CD4-positive, alpha-beta T cell (primary cell): ENCODE measurements at regions of chr2 and their contacts with region 1.

Region 1: GRCh38 chr2:120174963-120175581 is 48.1 kb downstream of the TMEM185B start:
- DNase-seq: peak in 4 of 14 experiments; percentile 26 to 79 (median 74)
- ATAC-seq: no peak
- H3K4me3 ChIP-seq: no peak overlapping the region
- H3K4me3 Mint-ChIP-seq: peak overlapping the region; percentile 50
- H3K27ac ChIP-seq: no peak overlapping the region
- H3K27ac Mint-ChIP-seq: peak overlapping the region; percentile 95
- H3K4me1 ChIP-seq: peaks cover 34% of the 10 kb centered on the region
- H3K4me1 Mint-ChIP-seq: peaks cover 52% of the 10 kb centered on the region
- H3K27me3 ChIP-seq: no peaks in the 10 kb centered on the region
- H3K27me3 Mint-ChIP-seq: no peaks in the 10 kb centered on the region
- CTCF ChIP-seq: peak; percentile 88

Region 2: DNA sequence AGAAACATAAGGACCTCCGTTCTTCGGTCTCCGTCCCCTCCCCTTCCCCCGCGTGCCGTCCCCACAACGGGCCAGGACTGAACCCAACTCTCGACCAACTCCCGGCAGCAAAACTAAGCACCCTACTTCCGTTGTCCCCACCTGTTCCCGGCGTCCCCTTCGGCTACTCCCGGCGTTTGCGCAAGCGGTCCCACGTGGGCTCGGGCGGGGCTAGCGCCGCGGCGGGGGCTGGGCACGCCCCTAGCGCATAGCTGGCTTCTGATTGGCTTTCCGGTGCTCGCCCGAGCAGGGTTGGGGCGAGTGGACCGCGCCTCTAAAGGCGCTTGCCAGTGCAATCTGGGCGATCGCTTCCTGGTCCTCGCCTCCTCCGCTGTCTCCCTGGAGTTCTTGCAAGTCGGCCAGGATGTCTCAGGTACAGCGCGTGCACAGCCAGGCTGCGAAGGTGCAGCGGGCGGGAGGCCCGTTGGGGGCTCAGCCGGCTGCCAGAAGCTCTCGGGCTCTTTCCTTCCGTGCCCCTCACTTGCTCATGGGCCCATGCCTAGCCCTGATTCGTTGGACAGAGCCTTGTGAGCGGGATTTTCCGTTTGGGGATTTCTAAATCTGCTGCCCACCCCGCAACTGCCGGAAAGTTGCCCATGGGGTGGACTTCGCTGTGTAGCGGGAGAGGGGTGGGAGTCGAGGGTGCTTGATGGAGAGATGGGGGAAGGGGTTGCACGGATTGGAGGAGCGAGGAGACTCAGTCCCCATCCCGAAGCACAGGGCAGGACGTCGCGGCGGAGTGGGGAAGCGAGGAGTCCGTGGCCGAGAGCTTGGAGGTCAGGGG is 808.2 kb before region 1 on chr2 and contains the starts of genes C2orf76 and DBI:
- CTCF ChIA-PET with region 1: no interaction called
- POLR2A ChIA-PET with region 1: no interaction called
- intact Hi-C with region 1: loop called in 1 of 2 experiments (anchors 10 kb)
- DNase-seq: peak; percentile 82 to 97 (median 88)
- ATAC-seq: peak; percentile 93
- H3K4me3 ChIP-seq: peak within 1 kb of the TSS; percentile 94
- H3K4me3 Mint-ChIP-seq: peak within 1 kb of the TSS; percentile 91
- H3K27ac ChIP-seq: peak within 1 kb of the TSS; percentile 59 to 76
- H3K27ac Mint-ChIP-seq: peak within 1 kb of the TSS; percentile 89
- H3K4me1 ChIP-seq: peaks cover 41% of the 10 kb centered on the region
- H3K4me1 Mint-ChIP-seq: peaks cover 59% of the 10 kb centered on the region
- H3K27me3 ChIP-seq: no peaks in the 10 kb centered on the region
- H3K27me3 Mint-ChIP-seq: no peaks in the 10 kb centered on the region
- CTCF ChIP-seq: no peak
- total RNA-seq, gene C2orf76: 2.8 to 4.5 TPM
- total RNA-seq, gene DBI: 23.6 to 27.4 TPM

Region 3: GRCh38 chr2:119694845-119695521 is 480.1 kb before region 1 on chr2:
- CTCF ChIA-PET with region 1: no interaction called
- POLR2A ChIA-PET with region 1: interaction called, 8 read pairs
- intact Hi-C with region 1: loop called in 1 of 2 experiments (anchors 5 kb)
- DNase-seq: peak in 12 of 14 experiments; percentile 10 to 63 (median 34)
- ATAC-seq: peak; percentile 81
- H3K4me3 ChIP-seq: peak overlapping the region; percentile 39
- H3K4me3 Mint-ChIP-seq: peak overlapping the region; percentile 83
- H3K27ac ChIP-seq: peak overlapping the region; percentile 29 to 34
- H3K27ac Mint-ChIP-seq: peak overlapping the region; percentile 71
- H3K4me1 ChIP-seq: peaks cover 47% of the 10 kb centered on the region
- H3K4me1 Mint-ChIP-seq: peaks cover 50% of the 10 kb centered on the region
- H3K27me3 ChIP-seq: peaks cover 0 to 2% of the 10 kb centered on the region in 2 experiments
- H3K27me3 Mint-ChIP-seq: no peaks in the 10 kb centered on the region
- CTCF ChIP-seq: no peak

Region 4: DNA sequence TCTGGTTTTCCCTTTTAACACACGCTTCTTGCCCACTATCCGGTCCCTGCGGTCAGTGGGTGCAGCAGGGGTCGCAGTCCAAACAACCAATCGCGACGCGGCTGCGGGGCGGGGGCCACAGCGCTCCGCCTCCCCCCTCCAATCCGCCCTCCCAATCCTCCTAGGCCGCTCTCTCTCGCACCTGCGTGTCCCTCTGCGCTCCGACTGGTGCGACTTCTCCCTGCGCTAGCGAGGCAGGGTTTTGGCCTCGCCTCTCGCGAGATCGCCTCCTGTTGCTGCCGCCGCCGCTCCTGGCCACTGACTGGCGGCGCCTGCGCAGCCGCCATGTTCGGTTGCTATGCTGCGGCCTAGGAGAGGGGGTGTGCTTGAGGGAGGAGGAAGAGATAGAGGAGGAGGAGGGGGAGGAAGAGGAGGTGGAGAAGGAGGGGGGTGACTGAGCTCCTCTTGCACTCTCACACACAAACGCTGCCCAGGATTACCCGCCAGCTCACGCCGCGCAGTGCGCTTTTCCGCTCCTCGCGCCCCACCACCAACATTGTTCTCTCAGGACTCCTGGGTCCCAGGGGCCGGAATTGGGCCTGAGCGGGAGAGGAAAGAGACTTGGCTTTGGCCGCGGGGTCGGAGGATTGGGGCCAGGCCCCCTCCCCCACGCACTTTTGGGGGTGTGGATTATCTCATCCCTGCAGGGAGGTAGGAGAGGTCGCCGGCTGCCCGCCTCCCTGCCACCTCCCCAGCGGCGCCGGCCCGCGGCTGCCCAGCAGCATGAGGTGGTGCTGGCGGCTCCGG is 415.4 kb before region 1 on chr2 and contains the start of gene PTPN4:
- CTCF ChIA-PET with region 1: interaction called, 5 read pairs
- POLR2A ChIA-PET with region 1: interaction called, 10 read pairs
- intact Hi-C with region 1: loop called (anchors 2 kb)
- DNase-seq: peak; percentile 91 to 99 (median 95)
- ATAC-seq: peak; percentile 88
- H3K4me3 ChIP-seq: peak within 1 kb of the TSS; percentile 92
- H3K4me3 Mint-ChIP-seq: peak within 1 kb of the TSS; percentile 97
- H3K27ac ChIP-seq: peak within 1 kb of the TSS; percentile 86 to 91
- H3K27ac Mint-ChIP-seq: peak within 1 kb of the TSS; percentile 94
- H3K4me1 ChIP-seq: peaks cover 9% of the 10 kb centered on the region
- H3K4me1 Mint-ChIP-seq: peaks cover 55% of the 10 kb centered on the region
- H3K27me3 ChIP-seq: no peaks in the 10 kb centered on the region
- H3K27me3 Mint-ChIP-seq: no peaks in the 10 kb centered on the region
- CTCF ChIP-seq: no peak
- total RNA-seq, gene PTPN4: 96.9 to 102 TPM

Region 5: DNA sequence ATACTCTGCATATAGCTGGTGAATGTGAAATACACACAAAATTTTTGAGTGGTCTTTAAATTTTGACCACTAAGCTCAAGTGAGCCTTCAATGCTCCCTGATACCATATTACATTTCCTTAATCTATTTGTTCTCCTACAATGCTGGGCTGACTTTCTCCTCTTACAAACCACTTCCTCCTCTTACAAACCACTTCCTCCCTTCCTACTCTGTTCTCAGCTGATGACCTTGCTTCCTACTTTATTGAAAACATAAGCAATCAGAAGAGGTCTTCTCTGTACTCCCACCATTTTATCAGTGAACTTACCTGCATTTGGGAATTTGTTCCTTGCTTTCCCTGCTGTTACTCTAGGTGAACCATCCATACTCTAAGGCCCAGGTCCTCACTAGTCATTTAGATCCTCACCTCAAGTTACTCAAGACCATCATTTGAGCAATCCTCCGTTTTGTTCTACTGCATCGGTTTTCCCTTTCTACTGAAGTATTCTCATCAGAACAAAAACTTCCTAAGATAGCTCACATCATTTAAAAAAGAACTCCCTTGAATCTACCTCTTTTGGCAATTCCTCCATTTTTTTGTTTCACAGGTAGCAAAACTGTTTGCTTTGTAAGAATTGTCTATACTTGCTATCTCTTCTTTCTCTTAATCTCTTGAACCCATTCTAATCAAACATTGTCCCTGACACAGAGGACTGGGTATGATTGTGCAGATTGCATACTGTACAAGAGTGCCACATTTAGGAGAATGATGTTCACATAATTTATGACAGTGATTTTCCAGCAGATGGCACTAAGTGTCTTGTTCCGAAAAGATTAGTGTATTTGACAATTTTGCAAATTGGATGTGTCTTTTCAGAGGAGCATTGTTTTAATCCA is 65.6 kb before region 1 on chr2:
- CTCF ChIA-PET with region 1: interaction called, 15 read pairs
- POLR2A ChIA-PET with region 1: interaction called, 30 read pairs
- intact Hi-C with region 1: loop called (anchors 1 to 2 kb)
- DNase-seq: peak in 4 of 14 experiments; percentile 3 to 83 (median 55)
- ATAC-seq: peak; percentile 83
- H3K4me3 ChIP-seq: peak overlapping the region; percentile 5
- H3K4me3 Mint-ChIP-seq: peak overlapping the region; percentile 44
- H3K27ac ChIP-seq: no peak overlapping the region
- H3K27ac Mint-ChIP-seq: peak overlapping the region; percentile 2
- H3K4me1 ChIP-seq: no peaks in the 10 kb centered on the region
- H3K4me1 Mint-ChIP-seq: peaks cover 39% of the 10 kb centered on the region
- H3K27me3 ChIP-seq: no peaks in the 10 kb centered on the region
- H3K27me3 Mint-ChIP-seq: no peaks in the 10 kb centered on the region
- CTCF ChIP-seq: peak; percentile 83

Region 6: DNA sequence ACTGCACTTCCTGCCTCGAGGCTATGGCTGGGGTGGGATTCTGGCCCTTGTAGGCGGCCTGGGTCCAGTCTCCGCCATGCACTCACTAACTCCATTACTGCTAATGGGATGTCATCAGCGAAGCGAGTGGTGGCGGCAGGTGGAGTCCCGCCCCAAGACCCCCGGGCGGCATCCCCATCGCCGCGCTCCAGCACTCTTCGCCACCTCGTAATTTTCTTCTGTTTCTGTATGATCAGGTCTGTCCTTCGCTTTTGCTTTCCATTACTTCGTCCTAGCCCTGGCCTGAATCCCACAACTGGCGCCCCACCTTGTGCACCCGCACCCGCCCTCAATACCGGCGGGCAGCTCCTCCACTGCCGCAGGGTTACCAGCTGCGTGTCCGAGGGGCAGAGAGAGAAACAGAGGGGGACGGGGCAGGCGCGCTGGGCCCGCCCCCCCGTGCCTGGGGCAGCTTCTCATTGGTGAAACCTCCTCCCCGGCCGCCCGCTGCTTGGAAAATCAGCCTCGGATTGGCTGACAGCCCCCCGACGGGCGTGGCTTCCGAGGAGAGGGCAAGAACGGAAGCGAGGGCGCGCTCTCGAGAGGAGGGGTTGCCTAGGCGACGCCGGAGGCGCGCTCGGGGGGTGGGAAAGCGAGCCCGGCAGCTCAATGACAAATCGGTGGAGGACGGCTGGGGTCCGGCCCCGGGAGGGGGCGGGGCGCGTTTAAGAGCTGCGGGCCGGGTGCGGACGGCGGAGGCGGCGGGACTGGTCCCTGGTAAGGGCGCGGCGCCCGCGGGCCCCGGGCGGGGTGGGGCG is 77.4 kb after region 1 on chr2 and contains the start of gene RALB:
- CTCF ChIA-PET with region 1: interaction called, 10 read pairs
- POLR2A ChIA-PET with region 1: interaction called, 26 read pairs
- intact Hi-C with region 1: loop called in 1 of 2 experiments (anchors 1 kb)
- DNase-seq: peak; percentile 95 to 99 (median 98)
- ATAC-seq: peak; percentile 95
- H3K4me3 ChIP-seq: peak within 1 kb of the TSS; percentile 83
- H3K4me3 Mint-ChIP-seq: peak within 1 kb of the TSS; percentile 97
- H3K27ac ChIP-seq: peak within 1 kb of the TSS; percentile 35 to 76
- H3K27ac Mint-ChIP-seq: peak within 1 kb of the TSS; percentile 87
- H3K4me1 ChIP-seq: peaks cover 20% of the 10 kb centered on the region
- H3K4me1 Mint-ChIP-seq: peaks cover 50% of the 10 kb centered on the region
- H3K27me3 ChIP-seq: peaks cover 0 to 3% of the 10 kb centered on the region in 2 experiments
- H3K27me3 Mint-ChIP-seq: peaks cover 8% of the 10 kb centered on the region
- CTCF ChIP-seq: no peak
- total RNA-seq, gene RALB: 3.1 to 3.6 TPM